GM10248 (cell line): ENCODE measurements at regions of chr10 and their contacts with region 1.

Region 1: GRCh38 chr10:61950449-61951143 is 49.1 kb downstream of the ARID5B start:
- DNase-seq: no peak
- CTCF ChIP-seq: no peak

Region 2: DNA sequence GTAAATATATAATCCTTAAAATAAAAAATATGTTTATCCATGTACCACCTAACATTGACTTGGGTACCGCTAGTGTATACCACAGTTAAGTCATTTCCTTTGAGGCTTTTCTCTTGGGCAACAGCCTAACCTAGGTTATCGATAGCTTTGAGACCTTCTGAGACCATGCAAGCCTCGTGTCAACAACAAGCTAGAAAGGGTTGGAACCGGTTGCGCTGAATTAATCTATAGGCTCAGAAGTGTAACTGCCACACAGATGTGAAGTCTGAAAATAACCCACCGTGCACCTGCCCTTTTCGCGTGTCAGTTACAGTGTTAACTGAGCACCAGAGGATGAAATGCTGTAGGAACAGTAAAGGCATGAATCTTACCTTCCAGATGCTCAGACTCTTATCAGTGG is 10.7 kb after region 1 on chr10:
- CTCF ChIA-PET with region 1: interaction called, 10 read pairs
- POLR2A ChIA-PET with region 1: no interaction called
- DNase-seq: peak; percentile 26
- CTCF ChIP-seq: no peak

Region 3: GRCh38 chr10:62109587-62110293 is 159.1 kb after region 1 on chr10:
- CTCF ChIA-PET with region 1: no interaction called
- POLR2A ChIA-PET with region 1: no interaction called
- DNase-seq: peak; percentile 35
- CTCF ChIP-seq: no peak

Region 4: DNA sequence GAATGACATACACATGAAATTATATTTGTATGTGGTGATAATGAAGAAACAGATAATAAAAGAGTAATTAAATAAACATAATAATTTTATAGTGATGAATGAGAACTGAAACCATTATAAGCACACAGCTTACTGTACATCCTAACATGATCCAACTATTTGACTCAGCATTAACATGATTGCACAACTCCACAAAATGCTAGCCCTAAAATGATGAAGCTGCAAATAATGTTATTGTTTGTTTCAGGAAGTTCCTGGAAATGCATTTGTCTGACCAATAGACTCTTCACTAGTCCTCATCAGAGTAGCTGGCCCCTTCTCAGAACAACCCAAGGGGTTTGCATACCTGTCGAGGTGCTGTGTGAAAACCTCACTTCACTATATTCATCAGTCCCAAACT is 202.6 kb after region 1 on chr10:
- CTCF ChIA-PET with region 1: no interaction called
- POLR2A ChIA-PET with region 1: no interaction called
- DNase-seq: no peak
- CTCF ChIP-seq: no peak